Activated T-helper 1 cell treated with anti-CD3 and anti-CD28 coated beads, Interleukin-12 subunit alpha, Interleukin-12 subunit beta, Interleukin-2, Interleukin-4 antibody, amounts not matched to agents 30 ng/mL and 10 ng/mL and 1 ng/mL, durations not matched to agents 14 hours and 24 hours and 36 hours (primary cell): ENCODE measurements at regions of chr9 and their contacts with region 1.

Region 1: GRCh38 chr9:33972698-33973097 is 76.0 kb downstream of the UBAP2 start:
- DNase-seq: no peak
- H3K4me3 Mint-ChIP-seq: no peak overlapping the region
- H3K27ac Mint-ChIP-seq: no peak overlapping the region
- H3K4me1 Mint-ChIP-seq: no peaks in the 10 kb centered on the region
- H3K27me3 Mint-ChIP-seq: no peaks in the 10 kb centered on the region

Region 2: GRCh38 chr9:33908121-33908520 is 64.6 kb before region 1 on chr9:
- intact Hi-C with region 1: no loop called
- DNase-seq: no peak
- H3K4me3 Mint-ChIP-seq: no peak overlapping the region
- H3K27ac Mint-ChIP-seq: no peak overlapping the region
- H3K4me1 Mint-ChIP-seq: peaks cover 23% of the 10 kb centered on the region
- H3K27me3 Mint-ChIP-seq: no peaks in the 10 kb centered on the region

Region 3: DNA sequence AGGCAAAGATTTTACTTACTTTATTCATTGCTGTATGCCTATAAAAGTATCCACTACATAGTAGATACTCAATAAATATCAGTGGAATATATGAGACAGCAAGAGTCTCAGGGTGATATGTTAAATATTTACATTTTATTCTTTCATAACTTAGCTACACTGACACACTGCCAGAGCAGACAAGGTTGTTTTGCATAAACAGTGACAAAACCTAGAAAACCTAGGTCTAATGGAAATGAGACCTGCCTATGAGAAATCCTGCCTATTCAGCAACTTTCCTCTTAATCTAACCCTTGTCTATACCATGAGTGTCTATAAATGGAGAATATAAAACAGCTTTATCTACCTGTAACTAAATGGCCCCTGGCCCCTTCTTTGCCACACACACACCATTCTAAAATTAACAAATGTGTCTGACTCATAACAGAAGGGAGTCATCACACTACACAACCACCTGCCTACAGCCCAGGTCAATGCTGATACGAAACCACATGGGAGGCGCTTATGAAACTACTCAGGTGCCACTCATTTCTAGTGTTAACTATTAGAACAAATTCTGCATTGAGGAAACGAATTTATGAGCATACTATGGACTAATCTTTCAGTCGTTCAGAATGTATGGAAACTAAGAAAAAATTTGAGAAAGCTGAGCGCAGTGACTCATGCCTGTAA is 15.7 kb after region 1 on chr9:
- intact Hi-C with region 1: loop called (anchors 1 kb)
- DNase-seq: no peak
- H3K4me3 Mint-ChIP-seq: no peak overlapping the region
- H3K27ac Mint-ChIP-seq: peak overlapping the region; percentile 9
- H3K4me1 Mint-ChIP-seq: peaks cover 10% of the 10 kb centered on the region
- H3K27me3 Mint-ChIP-seq: no peaks in the 10 kb centered on the region

Region 4: DNA sequence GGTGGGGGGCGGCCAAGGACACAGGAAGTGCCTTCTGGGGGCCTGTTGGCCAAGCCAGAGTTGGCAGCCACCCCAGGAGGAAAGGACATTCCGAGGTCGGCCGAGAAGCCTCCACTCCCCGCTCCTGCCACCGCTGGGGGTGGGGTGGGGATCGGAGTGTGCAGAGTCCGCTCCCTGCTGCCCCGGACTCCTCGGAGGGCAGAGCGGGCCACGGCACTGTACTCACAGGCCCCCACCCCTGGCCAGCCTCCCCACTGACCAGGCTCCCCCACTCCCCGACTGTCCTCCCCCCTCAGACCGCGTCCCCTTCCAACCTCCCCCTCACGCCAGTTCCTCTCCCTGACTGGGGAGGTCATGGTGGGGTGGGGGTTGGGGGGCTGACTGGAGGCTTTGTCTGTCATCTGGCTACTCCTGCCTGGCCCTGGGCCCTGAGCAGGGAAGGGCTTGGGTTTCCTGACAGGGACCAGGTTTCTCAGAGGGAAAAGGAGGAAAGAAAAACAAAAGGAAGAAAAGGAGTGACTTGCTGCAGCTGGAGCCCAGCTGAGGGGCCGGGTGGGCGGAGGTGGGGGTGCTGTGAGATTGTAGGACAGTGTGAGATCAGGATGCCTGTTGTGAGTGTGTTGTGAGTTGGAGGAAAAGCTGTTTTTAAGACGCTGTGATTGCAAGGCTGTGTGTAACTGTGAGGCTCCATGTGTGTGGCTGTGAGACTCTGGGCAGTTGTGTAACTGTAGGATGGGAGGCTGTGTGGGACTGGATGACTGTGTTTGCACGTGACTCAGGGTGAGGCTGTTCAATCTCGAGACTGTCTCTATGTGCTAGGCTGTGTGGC is 587.1 kb after region 1 on chr9:
- intact Hi-C with region 1: no loop called
- DNase-seq: no peak
- H3K4me3 Mint-ChIP-seq: no peak overlapping the region
- H3K27ac Mint-ChIP-seq: no peak overlapping the region
- H3K4me1 Mint-ChIP-seq: no peaks in the 10 kb centered on the region
- H3K27me3 Mint-ChIP-seq: peaks cover 6% of the 10 kb centered on the region